ENCODE measurements at regions of chr12 and their contacts with region 1.

Region 1: DNA sequence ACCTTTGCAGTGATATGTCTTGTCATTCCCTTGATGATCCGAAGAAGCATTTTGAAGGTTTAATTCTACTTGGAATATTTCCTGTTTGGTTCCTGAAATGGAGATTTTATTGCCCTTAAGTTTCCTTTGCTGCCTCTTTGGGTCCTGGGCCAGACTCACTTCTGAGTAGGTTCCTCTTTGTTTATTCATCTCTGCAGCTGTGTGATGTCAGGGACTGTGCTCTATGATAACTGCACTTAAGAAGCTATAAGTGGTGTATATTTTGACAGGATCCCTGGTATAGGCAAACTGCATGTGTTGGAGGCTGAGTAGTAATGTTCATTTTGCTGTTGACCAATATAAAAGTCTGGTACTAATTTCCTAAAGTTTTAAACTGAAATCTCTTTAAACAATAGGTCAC is at the start of gene KLRC4:
- DNase-seq: no peak
- H3K4me3 ChIP-seq: no peak within 1 kb of the TSS
- H3K4me3 Mint-ChIP-seq: no peak within 1 kb of the TSS
- H3K27ac Mint-ChIP-seq: no peak within 1 kb of the TSS
- H3K4me1 ChIP-seq: no peaks in the 10 kb centered on the region
- H3K4me1 Mint-ChIP-seq: peaks cover 5% of the 10 kb centered on the region
- H3K27me3 ChIP-seq: no peaks in the 10 kb centered on the region
- H3K27me3 Mint-ChIP-seq: no peaks in the 10 kb centered on the region
- CTCF ChIP-seq: no peak
- total RNA-seq, gene KLRC4: not detected in 2 replicates

Region 2: GRCh38 chr12:10121278-10121677 is 288.1 kb before region 1 on chr12:
- CTCF ChIA-PET with region 1: no interaction called
- POLR2A ChIA-PET with region 1: no interaction called
- intact Hi-C with region 1: no loop called
- DNase-seq: no peak
- H3K4me3 ChIP-seq: no peak overlapping the region
- H3K4me3 Mint-ChIP-seq: no peak overlapping the region
- H3K27ac Mint-ChIP-seq: no peak overlapping the region
- H3K4me1 ChIP-seq: no peaks in the 10 kb centered on the region
- H3K4me1 Mint-ChIP-seq: no peaks in the 10 kb centered on the region
- H3K27me3 ChIP-seq: no peaks in the 10 kb centered on the region
- H3K27me3 Mint-ChIP-seq: peaks cover 12% of the 10 kb centered on the region
- CTCF ChIP-seq: no peak

Region 3: DNA sequence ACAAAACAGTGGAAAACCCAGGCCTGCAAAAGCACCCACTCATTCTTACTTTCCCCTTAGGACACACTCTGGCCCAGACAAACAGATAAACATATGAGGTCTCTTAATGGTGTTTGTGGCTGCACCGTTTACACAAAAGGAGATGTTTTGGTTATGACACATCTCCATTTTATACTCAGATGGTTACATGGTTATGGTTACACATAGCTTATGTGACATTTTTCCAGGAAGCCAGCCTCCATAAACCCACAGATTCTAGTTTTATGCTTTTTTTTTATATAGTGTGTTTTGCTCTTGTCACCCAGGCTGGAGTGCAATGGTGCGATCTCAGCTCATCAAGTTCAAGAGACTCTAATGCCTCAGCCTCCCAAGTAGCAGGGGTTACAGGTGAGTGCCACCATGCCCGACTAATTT is 105.2 kb before region 1 on chr12:
- CTCF ChIA-PET with region 1: no interaction called
- POLR2A ChIA-PET with region 1: no interaction called
- intact Hi-C with region 1: no loop called
- DNase-seq: no peak
- H3K4me3 ChIP-seq: no peak overlapping the region
- H3K4me3 Mint-ChIP-seq: no peak overlapping the region
- H3K27ac Mint-ChIP-seq: no peak overlapping the region
- H3K4me1 ChIP-seq: no peaks in the 10 kb centered on the region
- H3K4me1 Mint-ChIP-seq: no peaks in the 10 kb centered on the region
- H3K27me3 ChIP-seq: no peaks in the 10 kb centered on the region
- H3K27me3 Mint-ChIP-seq: peaks cover 11% of the 10 kb centered on the region
- CTCF ChIP-seq: no peak

Region 4: DNA sequence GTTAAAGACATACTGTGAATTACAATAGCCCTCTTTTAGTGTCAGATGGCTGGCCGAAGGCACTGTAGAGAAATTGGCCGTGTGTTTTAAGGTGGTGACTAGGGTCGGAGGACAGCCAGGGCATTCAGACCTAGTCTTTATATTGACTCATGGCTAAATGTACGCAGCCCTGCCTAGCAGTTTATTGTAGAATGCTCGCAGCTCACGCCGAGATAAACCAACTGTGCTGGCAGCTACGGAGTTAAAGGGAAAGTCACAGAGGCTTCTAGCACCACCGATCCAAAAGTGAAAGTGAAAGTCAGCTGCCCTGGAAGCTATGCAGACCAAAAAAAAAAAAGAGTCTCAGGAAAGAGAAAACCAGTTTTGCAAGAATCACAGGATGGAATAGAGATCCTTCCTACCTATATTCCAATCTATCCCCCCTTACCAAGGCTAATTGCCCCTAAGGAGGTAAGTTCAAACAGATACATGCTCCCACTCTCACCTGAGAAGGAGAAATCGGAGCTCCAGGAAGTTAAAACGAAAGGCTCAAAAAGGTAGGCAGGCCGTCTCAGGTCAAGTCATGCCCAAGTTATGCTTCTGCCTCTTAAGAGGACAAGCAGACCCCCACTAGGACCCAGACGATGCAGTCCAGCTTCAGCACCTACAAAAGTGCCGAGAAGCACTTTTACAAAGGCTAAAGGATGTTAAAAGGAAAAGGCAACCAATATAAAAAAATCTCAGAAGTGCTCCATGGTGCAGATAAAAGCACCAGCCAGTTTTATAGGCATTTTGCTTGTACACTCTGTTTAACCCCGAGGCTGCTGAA is 44.4 kb before region 1 on chr12:
- CTCF ChIA-PET with region 1: interaction called, 3 read pairs
- POLR2A ChIA-PET with region 1: no interaction called
- intact Hi-C with region 1: loop called (anchors 1 kb)
- DNase-seq: peak; percentile 84 to 88
- H3K4me3 ChIP-seq: peak overlapping the region; percentile 39
- H3K4me3 Mint-ChIP-seq: no peak overlapping the region
- H3K27ac Mint-ChIP-seq: no peak overlapping the region
- H3K4me1 ChIP-seq: peaks cover 57% of the 10 kb centered on the region
- H3K4me1 Mint-ChIP-seq: peaks cover 14% of the 10 kb centered on the region
- H3K27me3 ChIP-seq: no peaks in the 10 kb centered on the region
- H3K27me3 Mint-ChIP-seq: no peaks in the 10 kb centered on the region
- CTCF ChIP-seq: no peak

Region 5: DNA sequence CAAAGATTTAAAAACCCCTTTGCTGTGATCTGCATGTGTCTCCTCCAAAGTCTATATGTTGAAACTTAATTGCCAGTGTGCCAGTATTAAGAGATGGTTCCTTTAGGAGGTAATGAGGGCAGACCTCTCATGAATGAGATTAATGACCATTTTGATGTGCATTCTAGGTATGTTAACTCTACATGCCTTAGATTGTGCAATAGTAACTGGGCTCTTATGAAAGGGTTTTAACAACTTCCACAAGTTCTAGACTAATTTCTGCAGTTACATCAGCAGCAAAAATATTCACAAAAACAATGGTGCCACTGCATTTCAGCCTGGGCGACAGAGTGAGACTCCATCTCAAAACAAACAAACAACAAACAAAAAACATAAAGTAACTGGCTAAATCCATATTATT is 420.6 kb after region 1 on chr12:
- CTCF ChIA-PET with region 1: no interaction called
- POLR2A ChIA-PET with region 1: no interaction called
- intact Hi-C with region 1: no loop called
- DNase-seq: no peak
- H3K4me3 ChIP-seq: no peak overlapping the region
- H3K4me3 Mint-ChIP-seq: no peak overlapping the region
- H3K27ac Mint-ChIP-seq: no peak overlapping the region
- H3K4me1 ChIP-seq: no peaks in the 10 kb centered on the region
- H3K4me1 Mint-ChIP-seq: no peaks in the 10 kb centered on the region
- H3K27me3 ChIP-seq: no peaks in the 10 kb centered on the region
- H3K27me3 Mint-ChIP-seq: no peaks in the 10 kb centered on the region
- CTCF ChIP-seq: no peak

Region 6: GRCh38 chr12:10884086-10884725 is 474.8 kb after region 1 on chr12 and contains the start of gene PRH1:
- CTCF ChIA-PET with region 1: no interaction called
- POLR2A ChIA-PET with region 1: no interaction called
- intact Hi-C with region 1: no loop called
- DNase-seq: no peak
- H3K4me3 ChIP-seq: no peak within 1 kb of the TSS
- H3K4me3 Mint-ChIP-seq: no peak within 1 kb of the TSS
- H3K27ac Mint-ChIP-seq: no peak within 1 kb of the TSS
- H3K4me1 ChIP-seq: no peaks in the 10 kb centered on the region
- H3K4me1 Mint-ChIP-seq: peaks cover 4% of the 10 kb centered on the region
- H3K27me3 ChIP-seq: no peaks in the 10 kb centered on the region
- H3K27me3 Mint-ChIP-seq: no peaks in the 10 kb centered on the region
- CTCF ChIP-seq: no peak
- total RNA-seq, gene PRH1: 21.2 and 24.4 TPM in 2 replicates